Right cardiac atrium (tissue), 5 donors: ENCODE measurements at regions of chr11 and their contacts with region 1.

Region 1: DNA sequence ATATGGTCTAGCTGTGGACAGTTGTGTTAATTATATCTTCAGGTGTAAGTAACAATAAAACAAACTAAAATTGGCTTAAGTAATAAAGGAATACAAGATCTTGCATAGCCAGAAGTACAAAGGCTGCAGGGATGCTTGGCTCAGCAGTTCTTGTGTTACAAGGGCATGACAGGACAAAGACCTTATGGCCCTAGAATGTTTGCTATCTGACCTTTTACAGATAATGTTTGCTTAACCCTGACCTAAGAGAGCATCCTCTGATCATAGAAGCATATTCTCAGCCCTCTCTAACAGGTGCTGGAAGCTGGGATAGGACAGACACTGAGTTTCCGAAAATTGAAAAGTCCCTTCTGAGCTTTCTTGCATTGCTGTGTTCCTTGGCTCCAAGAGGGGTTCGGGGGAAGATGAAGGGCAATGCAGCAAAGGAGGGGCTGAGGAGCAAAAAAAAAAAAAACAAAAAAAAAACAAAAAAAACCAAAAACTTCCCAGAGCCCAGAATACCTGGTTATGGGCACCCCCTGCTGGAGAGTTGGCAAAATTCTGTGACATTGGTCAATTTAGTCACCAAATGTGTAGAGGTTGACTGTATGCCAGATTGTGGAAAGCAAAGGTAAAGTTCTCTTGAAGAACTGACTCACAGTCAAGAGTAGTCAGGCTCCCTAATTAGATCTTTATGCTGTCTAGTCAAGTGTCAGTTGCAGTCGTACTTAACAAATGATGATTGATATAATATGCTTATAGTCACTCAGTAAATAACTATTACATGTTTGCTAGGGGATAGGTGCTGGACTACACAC is 10.4 kb upstream of the HIKESHI start:
- DNase-seq: peak in 1 of 3 donors; percentile 71
- ATAC-seq: no peak
- H3K4me3 ChIP-seq: no peak overlapping the region
- H3K27ac ChIP-seq: no peak overlapping the region
- H3K4me1 ChIP-seq: no peaks in the 10 kb centered on the region
- H3K27me3 ChIP-seq: no peaks in the 10 kb centered on the region

Region 2: DNA sequence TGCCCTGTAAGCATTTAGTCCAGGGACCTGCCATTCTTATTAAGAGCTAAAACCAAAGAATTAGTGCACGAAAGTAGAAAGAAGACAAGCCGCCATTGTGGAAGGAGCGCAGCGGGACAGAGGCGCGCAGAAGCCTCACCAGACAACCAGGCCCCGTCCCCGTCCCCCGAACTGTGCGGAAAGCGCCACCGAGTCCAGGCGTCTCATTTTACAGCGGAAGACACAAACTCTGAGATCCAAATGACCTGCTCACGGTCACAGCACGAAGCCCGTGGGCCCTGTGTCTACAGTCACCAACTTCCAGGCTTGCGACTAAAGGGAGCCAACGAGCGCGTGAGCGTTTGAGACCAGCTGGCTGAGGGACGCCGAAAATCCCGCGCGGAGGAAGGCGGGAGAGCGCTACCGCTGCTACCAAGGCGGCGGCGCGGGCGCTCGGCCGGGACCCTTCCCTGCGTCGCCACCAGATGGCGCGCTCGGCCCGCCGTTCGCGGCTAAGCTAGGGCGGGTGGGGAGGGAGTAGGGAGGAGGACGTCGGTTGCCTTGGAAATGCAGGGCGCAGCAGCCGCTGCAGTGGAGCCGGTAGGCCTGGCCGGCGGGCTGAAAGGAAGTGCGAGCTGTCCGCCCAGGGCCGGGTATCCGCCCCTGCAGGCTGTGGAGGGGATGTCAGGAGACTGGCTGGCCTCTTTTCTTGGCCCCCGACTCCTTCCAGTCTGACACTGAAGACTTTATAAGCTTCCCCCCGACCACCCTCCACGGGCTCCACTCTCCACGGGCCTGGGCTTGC is 436.9 kb before region 1 on chr11:
- intact Hi-C with region 1: loop called in 1 of 4 experiments (anchors 10 kb)
- DNase-seq: peak; percentile 93 to 97 (median 97)
- ATAC-seq: peak; percentile 99
- H3K4me3 ChIP-seq: peak overlapping the region; percentile 44
- H3K27ac ChIP-seq: peak overlapping the region; percentile 68
- H3K4me1 ChIP-seq: peaks cover 3% of the 10 kb centered on the region
- H3K27me3 ChIP-seq: no peaks in the 10 kb centered on the region